ENCODE measurements at regions of chr5 and their contacts with region 1.

Region 1: DNA sequence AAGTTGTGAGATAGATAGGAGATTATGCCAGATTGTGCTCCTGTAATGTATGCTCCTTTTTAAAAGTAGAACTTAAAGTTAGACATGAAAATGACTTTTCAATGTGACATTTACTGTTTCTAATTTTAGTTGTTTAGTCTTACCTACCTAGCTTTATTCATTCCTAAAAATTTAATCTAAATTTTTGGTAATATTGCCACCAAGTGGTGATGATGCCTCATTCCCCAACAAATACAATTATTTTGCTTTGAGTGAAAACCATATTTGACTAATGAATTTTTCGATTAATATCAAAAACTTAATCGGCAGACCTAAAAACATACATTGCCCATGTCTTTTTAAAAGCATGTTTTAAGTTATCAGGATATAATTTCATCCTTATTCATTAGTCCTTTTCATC is 25.6 kb downstream of the PPWD1 start:
- DNase-seq: no peak
- ATAC-seq: no peak
- H3K4me3 ChIP-seq: no peak overlapping the region
- H3K4me3 Mint-ChIP-seq: no peak overlapping the region
- H3K27ac ChIP-seq: no peak overlapping the region
- H3K27ac Mint-ChIP-seq: no peak overlapping the region
- H3K4me1 ChIP-seq: no peaks in the 10 kb centered on the region
- H3K4me1 Mint-ChIP-seq: no peaks in the 10 kb centered on the region
- H3K27me3 ChIP-seq: no peaks in the 10 kb centered on the region
- H3K27me3 Mint-ChIP-seq: no peaks in the 10 kb centered on the region
- CTCF ChIP-seq: no peak

Region 2: DNA sequence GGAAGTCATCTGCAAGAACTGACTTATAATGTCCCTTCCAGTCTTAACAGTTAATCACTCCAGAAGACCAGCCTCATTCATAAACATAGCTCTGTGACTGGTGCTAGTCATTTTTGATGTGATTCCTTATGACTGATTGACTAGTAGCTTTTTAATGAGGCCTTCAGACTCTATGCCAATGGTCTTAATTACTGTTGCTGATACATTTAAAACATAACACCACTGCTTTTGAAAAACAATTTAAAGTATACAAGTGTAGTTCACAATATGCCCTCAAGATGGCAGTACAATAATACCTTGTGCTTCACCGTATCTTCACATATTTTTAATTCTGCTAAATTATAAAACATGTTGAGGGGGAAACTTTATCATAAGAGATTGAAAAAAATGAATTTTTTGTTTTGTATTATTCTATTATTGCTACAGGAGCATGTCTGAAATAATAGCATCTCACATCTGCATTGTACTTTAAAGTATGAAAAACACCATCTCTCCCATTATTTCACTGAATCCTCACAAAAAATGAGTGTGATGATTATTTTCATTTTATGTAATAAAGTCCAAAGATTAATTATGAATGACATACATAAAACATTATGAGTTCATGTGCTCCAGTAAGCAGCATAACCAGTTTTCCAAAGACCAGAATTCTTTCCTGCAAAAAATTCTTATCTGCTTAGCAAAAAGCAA is 953.6 kb before region 1 on chr5:
- CTCF ChIA-PET with region 1: no interaction called
- POLR2A ChIA-PET with region 1: no interaction called
- intact Hi-C with region 1: loop called in 1 of 2 experiments (anchors 5 kb)
- DNase-seq: peak in 2 of 9 experiments; percentile 42 to 57
- ATAC-seq: no peak
- H3K4me3 ChIP-seq: no peak overlapping the region
- H3K4me3 Mint-ChIP-seq: no peak overlapping the region
- H3K27ac ChIP-seq: no peak overlapping the region
- H3K27ac Mint-ChIP-seq: no peak overlapping the region
- H3K4me1 ChIP-seq: no peaks in the 10 kb centered on the region
- H3K4me1 Mint-ChIP-seq: no peaks in the 10 kb centered on the region
- H3K27me3 ChIP-seq: no peaks in the 10 kb centered on the region
- H3K27me3 Mint-ChIP-seq: peaks cover 29% of the 10 kb centered on the region
- CTCF ChIP-seq: peak; percentile 97

Region 3: GRCh38 chr5:64811050-64811640 is 777.5 kb before region 1 on chr5:
- CTCF ChIA-PET with region 1: no interaction called
- POLR2A ChIA-PET with region 1: no interaction called
- intact Hi-C with region 1: loop called in 1 of 2 experiments (anchors 2 kb)
- DNase-seq: peak in 3 of 9 experiments; percentile 4 to 63 (median 52)
- ATAC-seq: no peak
- H3K4me3 ChIP-seq: no peak overlapping the region
- H3K4me3 Mint-ChIP-seq: no peak overlapping the region
- H3K27ac ChIP-seq: no peak overlapping the region
- H3K27ac Mint-ChIP-seq: no peak overlapping the region
- H3K4me1 ChIP-seq: no peaks in the 10 kb centered on the region
- H3K4me1 Mint-ChIP-seq: no peaks in the 10 kb centered on the region
- H3K27me3 ChIP-seq: no peaks in the 10 kb centered on the region
- H3K27me3 Mint-ChIP-seq: no peaks in the 10 kb centered on the region
- CTCF ChIP-seq: peak; percentile 65

Region 4: GRCh38 chr5:66406761-66407336 is 818.2 kb after region 1 on chr5:
- CTCF ChIA-PET with region 1: no interaction called
- POLR2A ChIA-PET with region 1: no interaction called
- intact Hi-C with region 1: no loop called
- DNase-seq: no peak
- ATAC-seq: no peak
- H3K4me3 ChIP-seq: no peak overlapping the region
- H3K4me3 Mint-ChIP-seq: no peak overlapping the region
- H3K27ac ChIP-seq: no peak overlapping the region
- H3K27ac Mint-ChIP-seq: no peak overlapping the region
- H3K4me1 ChIP-seq: no peaks in the 10 kb centered on the region
- H3K4me1 Mint-ChIP-seq: no peaks in the 10 kb centered on the region
- H3K27me3 ChIP-seq: peaks cover 0 to 2% of the 10 kb centered on the region in 2 experiments
- H3K27me3 Mint-ChIP-seq: peaks cover 22% of the 10 kb centered on the region
- CTCF ChIP-seq: no peak